GM10248 (cell line): ENCODE measurements at regions of chr6 and their contacts with region 1.

Region 1: DNA sequence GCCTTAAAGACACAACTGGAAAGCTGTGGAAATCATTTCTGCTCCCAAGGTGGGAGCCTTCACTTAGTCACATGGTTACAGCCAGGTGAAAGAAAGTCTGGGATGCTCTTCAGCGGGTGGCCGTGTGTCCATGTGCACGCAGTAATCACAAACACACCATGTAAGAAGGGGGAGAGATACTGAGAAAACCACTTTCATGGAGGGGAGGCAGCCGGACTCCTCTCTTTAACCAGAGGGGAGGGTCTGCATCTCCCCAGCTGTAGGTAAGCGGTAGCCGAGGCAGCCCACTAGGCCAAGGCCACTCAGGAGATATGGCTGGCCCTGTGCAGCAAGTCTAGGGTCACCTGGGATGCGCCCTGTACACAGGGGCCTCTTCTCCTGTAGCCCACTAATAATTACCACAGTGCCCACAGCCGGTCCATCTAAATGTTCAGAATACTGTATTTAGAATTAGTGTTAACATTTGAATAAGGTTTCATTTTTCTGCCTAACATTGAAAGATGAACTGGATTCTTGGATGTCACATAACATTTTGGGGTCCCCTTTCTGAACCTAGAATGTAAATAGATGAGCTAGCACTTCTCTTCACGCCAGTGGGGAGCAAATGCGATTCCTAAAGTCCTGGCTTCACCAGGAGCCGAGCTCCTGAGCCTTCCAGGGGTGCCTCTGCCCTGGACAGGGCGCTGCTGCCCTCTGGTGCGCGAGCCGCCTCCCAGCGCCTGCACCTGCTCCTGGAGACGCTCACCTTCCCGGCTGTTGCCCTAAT is 15.9 kb downstream of the GPR31 start:
- DNase-seq: peak; percentile 82
- CTCF ChIP-seq: peak; percentile 95

Region 2: GRCh38 chr6:166775180-166776081 is 366.4 kb before region 1 on chr6:
- CTCF ChIA-PET with region 1: interaction called, 38 read pairs
- POLR2A ChIA-PET with region 1: no interaction called
- DNase-seq: peak; percentile 85
- CTCF ChIP-seq: peak; percentile 90

Region 3: GRCh38 chr6:166999145-166999883 is 142.5 kb before region 1 on chr6 and contains the start of gene CEP43:
- CTCF ChIA-PET with region 1: interaction called, 11 read pairs
- POLR2A ChIA-PET with region 1: no interaction called
- DNase-seq: peak; percentile 98
- CTCF ChIP-seq: no peak

Region 4: DNA sequence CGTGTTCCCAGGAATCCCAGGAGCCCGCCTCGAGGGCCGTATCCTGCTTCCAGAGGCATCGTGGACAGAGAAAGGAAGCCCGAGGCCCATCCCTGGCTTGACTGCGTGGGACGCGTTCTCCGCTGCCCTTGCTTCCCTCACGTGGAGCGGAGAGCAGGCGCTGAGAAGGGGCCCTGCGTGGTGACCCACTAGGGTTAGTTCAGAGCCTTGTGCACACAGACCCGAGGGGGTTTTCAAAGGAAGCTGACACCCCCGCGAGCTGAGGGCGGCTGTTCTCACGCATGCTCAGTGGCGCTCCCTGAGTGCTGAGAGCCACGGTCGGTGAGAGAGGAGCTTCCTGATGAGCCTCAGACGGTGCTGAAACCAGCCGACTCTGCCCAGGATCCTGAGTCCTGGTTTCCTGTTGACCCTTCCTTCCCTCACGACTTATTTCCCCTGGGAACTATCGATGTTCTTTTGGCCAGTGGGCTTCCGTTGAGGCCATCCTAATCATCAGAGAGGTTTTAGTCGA is 47.9 kb before region 1 on chr6:
- CTCF ChIA-PET with region 1: interaction called, 15 read pairs
- POLR2A ChIA-PET with region 1: no interaction called
- DNase-seq: peak; percentile 88
- CTCF ChIP-seq: no peak

Region 5: DNA sequence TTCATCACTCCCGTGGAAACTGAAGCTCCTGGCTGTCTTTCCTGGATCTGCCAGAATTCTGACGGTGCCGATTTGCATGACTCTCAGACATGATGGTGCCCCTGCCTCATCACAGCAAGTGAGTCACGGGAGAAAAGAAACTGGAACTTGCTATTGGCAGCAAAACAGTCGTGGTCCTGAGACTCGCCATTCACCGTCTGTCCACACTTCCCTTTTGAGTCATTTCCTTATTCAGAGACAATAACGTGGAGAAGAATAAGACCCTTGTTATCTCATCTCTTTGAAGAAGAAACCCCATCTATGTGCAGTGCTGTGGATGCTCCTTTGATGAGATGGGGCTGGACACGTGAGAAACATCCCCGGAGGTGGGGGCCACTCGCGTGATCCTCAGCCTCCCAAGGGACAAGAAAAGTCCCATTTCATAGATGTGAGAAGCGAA is 11.7 kb after region 1 on chr6:
- CTCF ChIA-PET with region 1: interaction called, 18 read pairs
- POLR2A ChIA-PET with region 1: no interaction called
- DNase-seq: peak; percentile 75
- CTCF ChIP-seq: no peak